GM13977 (cell line): ENCODE measurements at regions of chr2 and their contacts with region 1.

Region 1: GRCh38 chr2:44912660-44913059 is 28.8 kb upstream of the SIX3 start:
- DNase-seq: no peak
- CTCF ChIP-seq: no peak

Region 2: GRCh38 chr2:44479122-44479887 is 433.4 kb before region 1 on chr2:
- in situ Hi-C with region 1: loop called (anchors 25 kb)
- DNase-seq: peak; percentile 75
- CTCF ChIP-seq: peak; percentile 100

Region 3: DNA sequence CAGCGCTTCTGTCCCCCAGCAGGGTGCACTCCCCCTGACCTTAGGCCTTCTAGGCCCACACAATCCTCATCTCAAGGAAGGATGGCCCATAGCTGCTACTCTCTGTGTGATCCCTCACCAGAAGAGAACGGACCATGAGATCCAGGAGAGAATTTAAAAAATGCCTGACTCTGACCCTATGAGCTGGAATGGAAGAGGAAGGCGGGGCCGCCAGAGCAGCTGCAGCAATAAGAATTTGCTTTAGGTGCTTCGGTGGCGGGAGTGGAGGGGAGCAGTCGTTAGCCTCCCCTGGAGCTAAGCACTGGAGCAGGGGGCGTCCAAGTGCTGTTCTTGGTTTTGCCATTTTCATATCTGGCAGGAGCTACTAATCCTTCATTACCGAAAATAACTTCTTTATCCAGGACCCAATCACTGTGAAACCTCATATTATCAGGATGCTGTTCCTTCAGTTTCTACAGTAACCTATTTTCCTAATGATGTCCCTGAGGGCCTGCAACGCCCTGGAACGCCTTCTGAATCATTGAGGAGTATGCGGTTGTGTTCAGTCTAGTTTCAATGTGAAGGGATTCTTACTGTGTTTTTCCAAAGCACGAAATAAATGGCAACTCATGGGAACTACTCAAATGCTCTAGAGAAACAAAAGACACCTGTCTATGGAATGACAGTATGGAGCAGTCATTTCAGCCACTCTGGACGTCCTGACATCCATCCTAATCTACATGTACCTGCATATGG is 201.7 kb after region 1 on chr2:
- in situ Hi-C with region 1: no loop called
- DNase-seq: no peak
- CTCF ChIP-seq: no peak

Region 4: GRCh38 chr2:45404807-45405297 is 492.2 kb after region 1 on chr2:
- in situ Hi-C with region 1: no loop called
- DNase-seq: no peak
- CTCF ChIP-seq: no peak